Naive thymus-derived CD4-positive, alpha-beta T cell (primary cell): ENCODE measurements at regions of chr19 and their contacts with region 1.

Region 1: GRCh38 chr19:57632987-57633831 is at the start of gene ZNF211:
- DNase-seq: peak; percentile 74 to 89 (median 86)
- ATAC-seq: peak; percentile 100
- H3K4me3 ChIP-seq: peak within 1 kb of the TSS; percentile 87
- H3K4me3 Mint-ChIP-seq: peak within 1 kb of the TSS; percentile 87 to 97 (median 94)
- H3K27ac ChIP-seq: peak within 1 kb of the TSS; percentile 90
- H3K27ac Mint-ChIP-seq: peak within 1 kb of the TSS; percentile 81 to 97 (median 89)
- H3K4me1 ChIP-seq: peaks cover 3 to 13% of the 10 kb centered on the region in 2 donors
- H3K4me1 Mint-ChIP-seq: peaks cover 21 to 36% (median 28%) of the 10 kb centered on the region in 7 donors
- H3K27me3 ChIP-seq: no peaks in the 10 kb centered on the region
- H3K27me3 Mint-ChIP-seq: no peaks in the 10 kb centered on the region
- total RNA-seq, gene ZNF211: 18.0 to 56.7 (median 33.7) TPM

Region 2: DNA sequence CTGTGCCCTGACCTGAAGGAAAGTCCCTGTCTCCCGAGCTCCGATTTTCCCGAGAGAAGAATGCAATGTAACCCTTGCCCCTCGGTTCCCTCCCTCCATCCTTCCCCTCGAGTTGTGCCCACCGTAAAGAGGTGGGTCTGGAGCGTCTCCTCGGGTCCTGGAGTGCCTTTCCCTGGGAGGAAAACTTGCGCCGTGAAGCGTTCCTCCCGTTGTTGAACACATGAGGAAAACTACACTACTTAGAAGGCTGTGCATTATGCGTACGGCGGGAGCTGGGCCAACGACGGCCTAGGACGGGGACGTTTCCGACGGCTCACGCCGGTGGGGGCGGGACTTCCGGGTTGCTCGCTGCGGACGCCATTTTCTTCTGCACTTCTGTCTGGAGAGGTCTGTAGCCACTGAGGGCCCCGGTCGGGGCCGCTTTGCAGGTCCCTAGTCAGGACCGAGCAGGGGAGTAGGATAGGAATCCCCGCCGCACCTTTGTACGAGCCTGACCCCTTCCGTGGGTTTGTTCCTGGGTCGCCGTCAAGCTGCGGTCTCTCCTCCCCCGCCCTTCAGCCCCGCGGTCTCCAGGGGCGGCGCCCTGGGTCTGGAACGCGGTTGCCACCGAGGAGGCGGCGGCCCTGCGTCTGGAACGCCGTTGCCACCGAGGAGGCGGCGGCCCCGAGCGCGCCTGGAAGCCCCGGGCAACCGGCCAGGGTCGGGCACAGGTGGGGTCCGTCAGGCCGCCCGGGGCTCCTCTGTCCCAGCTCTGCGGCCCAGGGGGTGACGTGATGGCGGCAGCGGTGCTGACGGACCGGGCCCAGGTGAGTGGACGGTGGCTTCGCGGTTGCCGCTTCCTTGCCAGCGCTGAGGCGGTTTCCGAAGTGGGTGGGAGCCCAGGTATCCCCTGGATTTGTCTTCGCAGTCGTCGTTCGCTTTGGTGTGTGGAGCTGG is 441.8 kb before region 1 on chr19 and contains the start of gene ZNF264:
- CTCF ChIA-PET with region 1: no interaction called
- POLR2A ChIA-PET with region 1: no interaction called
- intact Hi-C with region 1: loop called in 1 of 2 experiments (anchors 5 kb)
- DNase-seq: peak; percentile 79 to 90 (median 86)
- ATAC-seq: peak; percentile 98
- H3K4me3 ChIP-seq: peak within 1 kb of the TSS; percentile 95
- H3K4me3 Mint-ChIP-seq: peak within 1 kb of the TSS; percentile 90 to 97 (median 94)
- H3K27ac ChIP-seq: peak within 1 kb of the TSS; percentile 85
- H3K27ac Mint-ChIP-seq: peak within 1 kb of the TSS; percentile 92 to 97 (median 95)
- H3K4me1 ChIP-seq: peaks cover 11 to 22% of the 10 kb centered on the region in 2 donors
- H3K4me1 Mint-ChIP-seq: peaks cover 20 to 40% (median 35%) of the 10 kb centered on the region in 7 donors
- H3K27me3 ChIP-seq: no peaks in the 10 kb centered on the region
- H3K27me3 Mint-ChIP-seq: peaks cover 0 to 11% (median 6%) of the 10 kb centered on the region in 5 donors
- total RNA-seq, gene ZNF264: 31.5 to 65.9 (median 44.3) TPM

Region 3: DNA sequence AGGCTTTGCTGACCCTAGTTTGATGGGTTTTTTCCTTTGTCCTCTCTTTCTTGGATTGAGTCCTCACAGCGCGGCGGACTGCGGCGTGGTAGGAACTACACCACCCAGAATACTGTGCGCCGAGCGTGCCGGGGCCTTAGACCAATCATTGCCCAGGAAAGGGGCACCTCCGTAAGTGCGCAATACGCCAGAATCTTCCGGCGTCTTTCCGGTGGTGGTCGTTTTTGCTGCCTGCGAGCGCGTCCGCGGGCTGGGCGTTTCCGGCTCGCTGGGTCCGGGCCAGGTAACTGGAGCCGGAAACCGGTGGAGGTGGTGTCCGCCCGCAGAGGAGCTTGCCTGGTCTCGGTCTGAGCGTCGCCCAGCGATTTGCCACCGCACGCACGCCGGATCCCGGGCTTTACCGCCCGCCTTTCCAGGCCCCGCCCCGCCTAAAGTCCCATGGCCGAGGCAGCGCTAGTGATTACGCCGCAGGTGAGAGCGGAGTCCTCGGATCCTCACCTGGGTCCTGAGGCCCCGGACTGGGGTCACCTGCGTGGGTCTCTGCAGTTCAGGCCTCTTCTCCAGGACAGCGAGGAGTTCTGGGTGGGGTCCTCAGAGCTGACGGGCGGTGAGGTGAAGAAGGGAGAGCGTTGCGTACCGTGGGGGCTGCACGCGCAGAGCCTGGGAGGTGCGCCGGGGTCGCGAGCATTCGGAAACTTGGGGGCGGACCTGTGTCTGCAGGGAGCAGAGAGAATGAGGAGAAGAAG is 105.9 kb before region 1 on chr19 and contains the start of gene ZNF549:
- CTCF ChIA-PET with region 1: no interaction called
- POLR2A ChIA-PET with region 1: no interaction called
- intact Hi-C with region 1: loop called in 1 of 2 experiments (anchors 1 kb)
- DNase-seq: peak; percentile 65 to 90 (median 88)
- ATAC-seq: peak; percentile 99
- H3K4me3 ChIP-seq: peak within 1 kb of the TSS; percentile 98
- H3K4me3 Mint-ChIP-seq: peak within 1 kb of the TSS; percentile 89 to 98 (median 96)
- H3K27ac ChIP-seq: peak within 1 kb of the TSS; percentile 94
- H3K27ac Mint-ChIP-seq: peak within 1 kb of the TSS; percentile 80 to 98 (median 95)
- H3K4me1 ChIP-seq: peaks cover 14 to 18% of the 10 kb centered on the region in 2 donors
- H3K4me1 Mint-ChIP-seq: peaks cover 15 to 36% (median 32%) of the 10 kb centered on the region in 7 donors
- H3K27me3 ChIP-seq: no peaks in the 10 kb centered on the region
- H3K27me3 Mint-ChIP-seq: peaks cover 0 to 4% (median 0%) of the 10 kb centered on the region in 5 donors
- total RNA-seq, gene ZNF549: 6.9 to 24.8 (median 11.3) TPM

Region 4: DNA sequence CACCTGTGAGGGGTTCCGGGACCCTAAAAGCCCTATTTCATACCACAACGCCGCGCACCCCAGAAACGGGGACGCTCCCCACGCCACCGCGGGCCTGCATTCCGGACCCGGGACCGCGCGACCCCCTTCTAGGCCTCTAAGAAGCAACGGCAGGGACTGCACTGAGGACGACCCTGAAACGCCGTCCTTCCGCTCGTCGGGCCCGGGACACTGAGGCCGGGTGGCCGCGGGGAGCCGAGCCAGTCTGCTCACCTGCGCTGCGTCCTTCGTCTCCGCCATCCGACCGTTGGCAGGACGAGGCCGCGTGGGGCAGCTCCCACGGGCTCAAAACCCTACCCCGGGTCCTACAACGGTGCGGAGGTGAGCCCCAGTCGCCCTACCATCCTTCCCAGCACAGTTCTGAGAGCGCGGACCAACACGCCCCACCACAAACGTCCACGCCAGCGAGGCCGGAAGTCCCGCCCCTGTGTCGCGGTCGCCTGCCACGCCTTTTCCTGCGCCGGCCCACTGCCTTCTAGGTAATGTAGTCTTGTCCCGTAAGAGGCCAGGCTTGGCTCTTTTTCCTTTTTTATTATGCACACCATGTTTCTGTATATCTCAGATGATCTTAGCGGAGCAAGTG is 73.7 kb before region 1 on chr19 and contains the start of gene ZNF550:
- CTCF ChIA-PET with region 1: no interaction called
- POLR2A ChIA-PET with region 1: no interaction called
- intact Hi-C with region 1: loop called in 1 of 2 experiments (anchors 1 kb)
- DNase-seq: peak; percentile 71 to 85 (median 84)
- ATAC-seq: peak; percentile 99
- H3K4me3 ChIP-seq: peak within 1 kb of the TSS; percentile 89
- H3K4me3 Mint-ChIP-seq: peak within 1 kb of the TSS; percentile 87 to 99 (median 98)
- H3K27ac ChIP-seq: peak within 1 kb of the TSS; percentile 82
- H3K27ac Mint-ChIP-seq: peak within 1 kb of the TSS; percentile 81 to 96 (median 91)
- H3K4me1 ChIP-seq: peaks cover 16 to 19% of the 10 kb centered on the region in 2 donors
- H3K4me1 Mint-ChIP-seq: peaks cover 21 to 45% (median 33%) of the 10 kb centered on the region in 7 donors
- H3K27me3 ChIP-seq: no peaks in the 10 kb centered on the region
- H3K27me3 Mint-ChIP-seq: peaks cover 0 to 16% (median 4%) of the 10 kb centered on the region in 5 donors
- total RNA-seq, gene ZNF550: 12.9 to 56.2 (median 23.5) TPM

Region 5: DNA sequence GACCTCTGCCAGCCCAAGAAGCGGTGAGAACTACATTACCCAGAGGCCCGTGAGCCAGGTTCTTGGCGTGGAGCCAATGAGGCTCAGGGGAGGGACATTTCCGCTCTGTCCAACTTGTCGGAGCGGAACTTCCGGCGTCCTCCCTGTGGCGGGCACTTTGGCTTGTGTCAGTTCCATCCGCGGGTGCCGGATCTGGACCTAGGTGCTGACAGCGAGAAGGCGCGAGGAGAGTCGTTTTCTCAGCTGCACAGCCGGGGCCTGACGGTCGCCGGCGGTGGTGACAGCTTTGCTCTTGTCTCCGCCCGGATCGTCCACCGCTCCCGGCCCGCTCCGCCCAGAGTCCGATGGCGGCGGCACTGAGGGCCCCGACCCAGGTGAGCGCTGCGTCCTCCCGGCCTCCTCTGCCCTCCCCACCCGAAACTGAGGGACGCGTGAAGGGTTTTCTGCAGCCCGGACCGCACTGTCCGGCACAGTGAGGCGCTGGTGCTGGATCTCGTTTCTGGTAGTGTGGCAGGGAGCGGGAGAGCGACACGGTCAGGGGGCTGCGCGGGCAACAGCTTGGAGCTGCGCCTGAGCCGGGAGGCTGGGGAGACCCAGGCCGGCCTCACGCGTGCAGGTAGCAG is 33.3 kb before region 1 on chr19 and contains the start of gene ZNF530:
- CTCF ChIA-PET with region 1: no interaction called
- POLR2A ChIA-PET with region 1: interaction called, 3 read pairs
- intact Hi-C with region 1: loop called (anchors 1 to 5 kb)
- DNase-seq: peak; percentile 61 to 81 (median 73)
- ATAC-seq: peak; percentile 97
- H3K4me3 ChIP-seq: peak within 1 kb of the TSS; percentile 87
- H3K4me3 Mint-ChIP-seq: peak within 1 kb of the TSS; percentile 71 to 92 (median 89)
- H3K27ac ChIP-seq: peak within 1 kb of the TSS; percentile 69
- H3K27ac Mint-ChIP-seq: peak within 1 kb of the TSS in 8 of 9 donors; percentile 51 to 90 (median 81)
- H3K4me1 ChIP-seq: peaks cover 10% of the 10 kb centered on the region in 2 donors
- H3K4me1 Mint-ChIP-seq: peaks cover 14 to 28% (median 22%) of the 10 kb centered on the region in 7 donors
- H3K27me3 ChIP-seq: no peaks in the 10 kb centered on the region
- H3K27me3 Mint-ChIP-seq: no peaks in the 10 kb centered on the region
- total RNA-seq, gene ZNF530: 2.0 to 10.9 (median 6.2) TPM

Region 6: GRCh38 chr19:57613941-57614743 is 19.1 kb before region 1 on chr19 and contains the start of gene ZNF134:
- CTCF ChIA-PET with region 1: no interaction called
- POLR2A ChIA-PET with region 1: interaction called, 16 read pairs
- intact Hi-C with region 1: loop called (anchors 1 kb)
- DNase-seq: peak; percentile 74 to 90 (median 84)
- ATAC-seq: peak; percentile 100
- H3K4me3 ChIP-seq: peak within 1 kb of the TSS; percentile 94
- H3K4me3 Mint-ChIP-seq: peak within 1 kb of the TSS; percentile 79 to 95 (median 90)
- H3K27ac ChIP-seq: peak within 1 kb of the TSS; percentile 76
- H3K27ac Mint-ChIP-seq: peak within 1 kb of the TSS; percentile 78 to 92 (median 86)
- H3K4me1 ChIP-seq: peaks cover 14 to 15% of the 10 kb centered on the region in 2 donors
- H3K4me1 Mint-ChIP-seq: peaks cover 18 to 43% (median 34%) of the 10 kb centered on the region in 7 donors
- H3K27me3 ChIP-seq: no peaks in the 10 kb centered on the region
- H3K27me3 Mint-ChIP-seq: no peaks in the 10 kb centered on the region
- total RNA-seq, gene ZNF134: 14.6 to 33.9 (median 25.7) TPM

Region 7: DNA sequence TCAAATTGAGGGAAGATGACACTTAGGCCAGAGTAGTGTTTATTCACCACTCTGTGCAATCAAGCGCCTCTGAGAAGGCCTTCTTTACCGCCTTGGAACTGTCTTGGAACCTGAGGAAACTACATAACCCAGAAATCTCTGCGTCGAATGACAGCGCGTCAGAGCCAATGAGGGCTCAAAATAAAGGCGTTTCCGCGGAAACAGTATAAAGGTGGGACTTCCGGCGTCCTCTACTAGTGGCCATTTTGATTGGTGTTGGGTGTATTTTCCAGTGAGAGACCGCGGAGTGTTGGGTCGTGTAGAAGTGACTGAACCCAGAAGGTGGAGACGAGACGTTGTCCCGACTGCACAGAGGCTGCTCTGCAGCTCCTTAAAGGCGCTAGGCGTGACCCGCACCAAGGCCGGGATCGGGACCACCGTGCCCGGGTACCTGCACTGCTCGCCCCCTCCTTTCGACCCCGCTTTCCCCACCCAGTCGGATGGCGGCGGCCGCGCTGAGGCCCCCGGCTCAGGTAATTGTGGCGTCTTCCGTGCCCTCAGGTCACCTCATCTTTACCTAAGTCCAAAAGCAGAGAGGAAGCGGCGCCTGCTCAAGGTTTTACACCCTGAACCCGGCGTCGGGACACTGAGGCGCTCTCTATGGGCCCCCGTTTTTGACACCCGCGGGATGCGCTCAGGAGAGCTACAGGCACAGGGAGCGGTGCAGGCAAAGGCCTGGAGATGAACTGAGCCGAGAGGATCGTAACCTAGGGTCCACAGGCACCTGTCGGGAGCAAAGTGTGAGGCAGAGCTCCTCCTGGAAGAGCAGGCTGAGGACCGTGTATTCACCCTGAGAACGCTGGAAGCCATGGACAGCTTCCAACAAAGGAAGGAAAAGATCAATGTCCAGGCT is 113.6 kb after region 1 on chr19 and contains the start of gene ZNF776:
- CTCF ChIA-PET with region 1: no interaction called
- POLR2A ChIA-PET with region 1: no interaction called
- intact Hi-C with region 1: no loop called
- DNase-seq: peak; percentile 40 to 90 (median 84)
- ATAC-seq: peak; percentile 99
- H3K4me3 ChIP-seq: peak within 1 kb of the TSS; percentile 86
- H3K4me3 Mint-ChIP-seq: peak within 1 kb of the TSS; percentile 91 to 99 (median 94)
- H3K27ac ChIP-seq: peak within 1 kb of the TSS; percentile 85
- H3K27ac Mint-ChIP-seq: peak within 1 kb of the TSS; percentile 81 to 99 (median 94)
- H3K4me1 ChIP-seq: peaks cover 6 to 16% of the 10 kb centered on the region in 2 donors
- H3K4me1 Mint-ChIP-seq: peaks cover 13 to 40% (median 26%) of the 10 kb centered on the region in 7 donors
- H3K27me3 ChIP-seq: no peaks in the 10 kb centered on the region
- H3K27me3 Mint-ChIP-seq: no peaks in the 10 kb centered on the region
- total RNA-seq, gene ZNF776: 18.9 to 52.3 (median 21.8) TPM

Region 8: DNA sequence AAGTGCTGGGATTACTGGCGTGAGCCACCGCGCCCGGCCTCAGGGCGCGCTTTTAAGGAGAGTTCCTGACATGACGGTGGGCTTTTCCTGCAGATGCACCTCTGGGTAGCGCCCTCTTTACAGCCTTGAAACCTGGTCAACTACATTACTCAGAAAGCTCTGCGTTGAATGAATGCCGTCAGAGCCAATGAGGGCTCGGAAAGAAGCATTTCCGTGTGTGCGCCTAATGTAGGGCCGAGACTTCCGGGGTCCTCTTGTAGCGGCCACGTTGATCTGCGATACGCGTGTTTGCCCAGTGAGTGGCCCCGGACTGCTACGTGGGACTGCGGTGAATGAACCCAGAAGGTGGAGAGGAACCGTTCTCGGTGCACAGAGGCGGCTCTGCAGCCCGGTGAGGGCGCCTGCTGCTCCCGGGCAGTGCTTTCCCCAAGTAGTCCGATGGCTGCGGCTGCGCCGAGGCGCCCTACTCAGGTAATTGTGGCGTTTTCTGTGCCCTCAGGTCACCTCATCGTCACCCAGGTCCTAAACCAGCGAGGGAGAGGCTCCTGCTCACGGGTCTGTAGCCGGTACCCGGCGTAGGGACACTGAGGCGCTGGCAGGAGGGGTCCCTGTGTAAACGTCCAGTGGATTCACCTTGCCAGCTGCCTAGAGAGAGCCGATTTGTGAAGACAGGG is 186.4 kb after region 1 on chr19:
- CTCF ChIA-PET with region 1: no interaction called
- POLR2A ChIA-PET with region 1: no interaction called
- intact Hi-C with region 1: loop called in 1 of 2 experiments (anchors 1 kb)
- DNase-seq: peak; percentile 45 to 85 (median 79)
- ATAC-seq: peak; percentile 89
- H3K4me3 ChIP-seq: peak overlapping the region; percentile 98
- H3K4me3 Mint-ChIP-seq: peak overlapping the region; percentile 95 to 99 (median 98)
- H3K27ac ChIP-seq: peak overlapping the region; percentile 92
- H3K27ac Mint-ChIP-seq: peak overlapping the region; percentile 88 to 99 (median 95)
- H3K4me1 ChIP-seq: peaks cover 0 to 13% of the 10 kb centered on the region in 2 donors
- H3K4me1 Mint-ChIP-seq: peaks cover 38 to 73% (median 67%) of the 10 kb centered on the region in 7 donors
- H3K27me3 ChIP-seq: no peaks in the 10 kb centered on the region
- H3K27me3 Mint-ChIP-seq: no peaks in the 10 kb centered on the region